Activated CD4-positive, alpha-beta memory T cell treated with anti-CD3 and anti-CD28 coated beads for 36 hours (primary cell): ENCODE measurements at regions of chr20 and their contacts with region 1.

Region 1: GRCh38 chr20:45293041-45294002 is 13.3 kb upstream of the RBPJL start:
- DNase-seq: peak; percentile 89
- H3K4me3 Mint-ChIP-seq: peak overlapping the region; percentile 65
- H3K27ac Mint-ChIP-seq: no peak overlapping the region
- H3K4me1 Mint-ChIP-seq: no peaks in the 10 kb centered on the region
- H3K27me3 Mint-ChIP-seq: peaks cover 28% of the 10 kb centered on the region

Region 2: DNA sequence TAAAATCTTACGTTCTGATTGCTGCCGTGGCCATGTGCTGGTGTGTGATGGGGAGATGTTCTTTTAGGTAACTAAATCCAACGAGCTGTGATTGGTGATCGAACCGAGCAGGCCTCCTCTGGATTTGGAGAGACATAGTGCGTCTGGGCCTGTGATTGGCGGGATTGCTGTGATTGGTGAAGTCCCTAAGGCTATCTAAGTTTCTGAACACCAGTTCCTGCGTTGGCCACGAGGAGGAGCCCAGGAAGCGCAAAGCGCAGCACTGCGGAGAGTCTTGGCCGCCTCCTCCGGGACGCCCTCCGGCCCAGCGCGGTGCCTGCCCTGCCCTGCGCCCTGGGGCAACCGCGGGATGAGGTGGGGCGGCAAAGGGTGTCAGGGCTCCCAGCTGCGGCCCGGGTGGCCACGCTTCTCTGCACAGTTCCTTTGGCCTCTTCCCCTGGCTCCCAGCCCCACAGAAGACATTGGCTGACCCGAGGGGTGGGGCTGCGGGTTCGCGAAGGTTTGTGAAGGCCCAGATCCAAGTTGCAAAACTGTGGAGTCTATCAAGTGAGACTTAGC is 904.8 kb before region 1 on chr20:
- CTCF ChIA-PET with region 1: no interaction called
- POLR2A ChIA-PET with region 1: no interaction called
- intact Hi-C with region 1: no loop called
- DNase-seq: peak; percentile 84
- H3K4me3 Mint-ChIP-seq: no peak overlapping the region
- H3K27ac Mint-ChIP-seq: no peak overlapping the region
- H3K4me1 Mint-ChIP-seq: peaks cover 2% of the 10 kb centered on the region
- H3K27me3 Mint-ChIP-seq: peaks cover 14% of the 10 kb centered on the region

Region 3: DNA sequence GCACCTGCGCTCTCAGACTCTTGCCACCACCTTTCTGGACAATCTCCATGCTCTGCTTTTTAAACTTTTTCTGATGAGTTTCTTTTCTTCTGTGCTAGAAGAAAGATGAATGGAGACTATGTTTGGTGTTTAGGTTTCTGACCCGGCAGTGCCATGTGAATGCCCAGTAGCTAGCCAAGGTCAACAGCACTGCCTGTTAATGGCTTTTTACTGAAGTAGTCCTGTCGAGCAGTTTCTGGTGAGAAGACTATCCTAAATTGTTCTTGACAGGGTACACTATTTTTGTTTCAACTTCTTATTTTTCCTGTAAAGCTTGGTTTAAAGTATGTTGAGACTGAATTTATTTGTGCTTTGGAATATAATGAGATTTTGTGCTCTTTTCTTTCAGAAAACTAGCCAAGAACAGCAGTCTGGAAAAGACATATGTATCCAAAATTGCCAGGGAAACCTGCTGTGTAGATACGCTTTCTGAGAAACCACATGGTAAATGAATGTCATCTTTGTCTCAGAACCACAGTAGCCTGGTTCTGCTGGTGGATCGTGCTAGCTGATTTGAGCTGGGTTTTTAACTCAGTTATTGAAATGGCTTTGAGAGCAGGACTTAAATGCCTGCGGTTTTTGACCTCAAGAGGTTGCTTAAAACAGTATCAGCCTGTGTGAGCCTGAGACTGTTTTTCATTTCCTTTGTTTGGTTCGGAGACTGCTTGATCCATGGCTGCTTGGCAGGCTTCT is 240.5 kb before region 1 on chr20:
- CTCF ChIA-PET with region 1: interaction called, 27 read pairs
- POLR2A ChIA-PET with region 1: no interaction called
- intact Hi-C with region 1: no loop called
- DNase-seq: peak; percentile 41
- H3K4me3 Mint-ChIP-seq: no peak overlapping the region
- H3K27ac Mint-ChIP-seq: peak overlapping the region; percentile 74
- H3K4me1 Mint-ChIP-seq: peaks cover 77% of the 10 kb centered on the region
- H3K27me3 Mint-ChIP-seq: no peaks in the 10 kb centered on the region

Region 4: DNA sequence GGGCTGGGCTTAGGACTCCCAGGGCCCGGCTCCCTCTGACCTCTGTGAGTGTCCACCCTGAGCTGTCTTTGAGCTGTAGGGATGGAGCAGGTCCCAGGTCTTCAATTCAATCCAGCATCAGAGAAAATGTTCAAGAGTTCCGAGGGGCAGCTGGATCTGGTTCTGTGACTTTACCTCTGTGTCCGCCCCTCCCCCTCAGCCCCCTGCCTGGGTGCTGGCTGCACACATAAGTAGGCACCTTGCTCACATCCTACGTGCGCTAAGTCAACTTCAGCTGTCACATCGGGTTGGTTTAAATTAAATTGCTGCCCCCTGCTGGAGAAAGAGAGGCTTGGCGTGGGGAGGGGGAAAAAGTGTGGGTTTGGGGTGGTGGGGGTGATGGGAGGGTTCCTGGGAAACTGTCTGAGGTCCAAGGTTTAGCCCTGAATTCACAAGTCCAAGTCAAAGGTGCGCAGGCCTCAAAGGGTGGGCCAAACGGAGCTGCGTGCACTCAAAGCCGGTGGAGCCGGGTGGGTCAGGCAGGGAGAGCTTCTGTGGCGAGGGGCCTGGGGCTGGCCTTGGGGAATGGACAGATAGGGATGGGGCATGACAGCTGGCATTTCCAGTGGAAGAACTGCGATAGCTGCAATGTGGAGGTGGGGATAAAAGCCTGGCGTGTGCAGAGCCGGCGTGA is 181.4 kb before region 1 on chr20:
- CTCF ChIA-PET with region 1: interaction called, 47 read pairs
- POLR2A ChIA-PET with region 1: no interaction called
- intact Hi-C with region 1: no loop called
- DNase-seq: peak; percentile 37
- H3K4me3 Mint-ChIP-seq: no peak overlapping the region
- H3K27ac Mint-ChIP-seq: no peak overlapping the region
- H3K4me1 Mint-ChIP-seq: peaks cover 9% of the 10 kb centered on the region
- H3K27me3 Mint-ChIP-seq: no peaks in the 10 kb centered on the region

Region 5: DNA sequence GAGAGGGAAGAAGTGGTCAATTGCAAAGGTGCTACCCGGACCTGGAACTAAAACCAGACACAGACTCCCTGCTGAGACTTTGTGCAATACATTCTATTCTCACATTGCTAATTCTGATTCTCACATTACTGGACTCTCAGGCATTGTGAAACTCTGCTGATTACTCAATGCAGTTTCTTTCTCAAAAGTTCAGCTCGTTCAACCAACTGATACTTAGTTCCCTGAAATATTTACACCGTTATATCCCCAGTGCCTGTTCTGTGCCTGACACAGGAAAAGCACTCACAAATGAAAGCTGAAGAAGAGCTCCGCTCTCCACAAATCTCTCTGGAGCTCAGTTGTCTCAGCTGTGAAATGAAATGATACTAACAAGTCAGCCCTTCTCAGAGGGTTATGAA is 38.5 kb before region 1 on chr20:
- CTCF ChIA-PET with region 1: interaction called, 13 read pairs
- POLR2A ChIA-PET with region 1: no interaction called
- intact Hi-C with region 1: no loop called
- DNase-seq: no peak
- H3K4me3 Mint-ChIP-seq: no peak overlapping the region
- H3K27ac Mint-ChIP-seq: no peak overlapping the region
- H3K4me1 Mint-ChIP-seq: no peaks in the 10 kb centered on the region
- H3K27me3 Mint-ChIP-seq: peaks cover 27% of the 10 kb centered on the region

Region 6: GRCh38 chr20:45322952-45323383 is 29.6 kb after region 1 on chr20:
- CTCF ChIA-PET with region 1: interaction called, 61 read pairs
- POLR2A ChIA-PET with region 1: interaction called, 3 read pairs
- intact Hi-C with region 1: no loop called
- DNase-seq: no peak
- H3K4me3 Mint-ChIP-seq: no peak overlapping the region
- H3K27ac Mint-ChIP-seq: no peak overlapping the region
- H3K4me1 Mint-ChIP-seq: peaks cover 26% of the 10 kb centered on the region
- H3K27me3 Mint-ChIP-seq: no peaks in the 10 kb centered on the region

Region 7: DNA sequence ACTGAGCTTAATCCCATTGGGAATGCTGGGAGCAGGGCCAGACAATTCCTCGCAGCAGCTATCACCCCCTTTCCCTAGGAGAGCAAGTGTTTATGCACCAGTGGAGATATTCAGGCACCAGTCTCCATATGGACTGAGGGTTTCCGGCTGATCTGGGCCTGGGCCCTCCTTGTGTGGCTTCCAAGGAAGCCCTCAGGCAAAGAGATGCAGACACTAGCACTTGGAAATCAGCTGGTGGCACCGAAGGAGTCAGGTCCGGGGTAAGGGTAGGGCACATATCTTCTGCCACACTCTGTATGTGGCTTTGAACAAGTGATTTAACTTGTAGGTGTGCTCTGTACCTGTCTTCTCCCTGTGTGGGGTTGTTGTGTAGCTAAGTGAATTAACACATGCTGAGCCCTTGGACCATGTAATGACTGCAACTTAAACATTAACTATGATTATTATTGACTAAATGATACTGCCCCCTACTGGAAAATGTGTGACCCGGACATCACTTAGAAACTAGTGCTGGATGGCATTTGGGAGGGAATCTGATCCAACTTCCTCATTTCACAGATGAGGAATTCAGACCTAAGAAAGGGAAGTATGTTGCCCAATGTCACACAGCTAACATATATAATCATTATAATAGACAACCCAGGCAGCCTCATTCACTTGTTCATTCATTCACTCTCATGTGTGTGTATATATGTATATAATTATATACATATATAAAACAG is 156.9 kb after region 1 on chr20:
- CTCF ChIA-PET with region 1: interaction called, 10 read pairs
- POLR2A ChIA-PET with region 1: no interaction called
- intact Hi-C with region 1: no loop called
- DNase-seq: no peak
- H3K4me3 Mint-ChIP-seq: no peak overlapping the region
- H3K27ac Mint-ChIP-seq: no peak overlapping the region
- H3K4me1 Mint-ChIP-seq: no peaks in the 10 kb centered on the region
- H3K27me3 Mint-ChIP-seq: peaks cover 3% of the 10 kb centered on the region